Dorsolateral prefrontal cortex (tissue), 120 donors: ENCODE measurements at regions of chr11 and their contacts with region 1.

Region 1: DNA sequence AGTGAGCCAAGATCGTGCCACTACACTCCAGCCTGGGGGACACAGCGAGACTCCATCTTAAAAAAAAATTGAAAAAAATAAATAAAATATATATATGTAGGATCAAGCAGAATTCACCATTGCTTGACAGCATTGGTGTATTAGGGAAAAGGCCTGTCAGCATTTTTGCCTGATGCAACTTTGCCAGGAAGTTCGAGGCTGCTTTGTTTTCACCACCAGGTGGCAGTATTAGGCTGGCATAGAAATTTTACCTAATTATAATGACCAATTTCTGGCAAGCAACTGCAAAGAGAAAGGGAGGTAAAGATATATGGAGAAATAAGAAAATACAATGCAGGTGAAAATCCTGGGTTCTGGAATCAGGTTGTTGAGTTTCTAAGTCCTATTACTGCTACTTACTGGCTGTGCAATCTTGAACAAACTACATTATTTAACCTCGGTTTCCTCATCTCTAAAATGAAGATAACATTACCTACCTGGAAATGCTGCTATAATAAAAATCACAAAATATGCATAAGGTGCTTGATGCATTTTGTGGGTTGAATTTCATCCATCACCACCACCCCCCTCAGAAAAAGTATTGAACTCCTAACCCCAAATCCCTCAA is 24.7 kb downstream of the LAYN start:
- DNase-seq: peak in 8 of 10 donors; percentile 49 to 85 (median 60)
- H3K4me3 ChIP-seq: no peak overlapping the region
- H3K27ac ChIP-seq: peak overlapping the region in 1 of 59 donors; percentile 30
- H3K27me3 ChIP-seq: no peaks in the 10 kb centered on the region
- CTCF ChIP-seq: peak; percentile 87 to 98 (median 95)

Region 2: DNA sequence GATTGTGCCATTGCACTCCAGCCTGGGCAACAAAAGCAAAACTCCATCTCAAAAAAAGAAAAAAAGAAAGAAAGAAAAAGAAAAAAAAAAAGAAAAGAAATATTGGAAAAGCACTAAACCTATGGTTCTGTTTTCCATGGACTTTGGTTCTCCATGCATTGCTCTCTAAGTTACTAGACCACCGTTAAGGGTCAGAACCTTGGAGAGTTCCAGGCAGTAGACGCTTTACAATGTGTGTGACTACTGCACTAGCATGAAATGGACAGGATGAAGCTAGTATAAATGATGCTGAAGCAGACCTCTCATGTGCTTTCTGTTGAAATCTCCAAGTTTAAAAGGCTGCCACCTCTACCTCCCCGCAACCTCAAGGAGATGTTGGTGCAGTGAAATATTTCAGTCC is 100.6 kb after region 1 on chr11:
- intact Hi-C with region 1: no loop called
- DNase-seq: no peak
- H3K4me3 ChIP-seq: no peak overlapping the region
- H3K27ac ChIP-seq: no peak overlapping the region
- H3K27me3 ChIP-seq: no peaks in the 10 kb centered on the region
- CTCF ChIP-seq: no peak

Region 3: GRCh38 chr11:111841370-111842053 is 276.3 kb after region 1 on chr11:
- intact Hi-C with region 1: loop called (anchors 1 to 10 kb)
- DNase-seq: peak; percentile 85 to 98 (median 92)
- H3K4me3 ChIP-seq: peak overlapping the region in 10 of 59 donors; percentile 0 to 25 (median 15)
- H3K27ac ChIP-seq: peak overlapping the region in 48 of 59 donors; percentile 0 to 75 (median 44)
- H3K27me3 ChIP-seq: no peaks in the 10 kb centered on the region
- CTCF ChIP-seq: peak; percentile 86 to 99 (median 96)

Region 4: GRCh38 chr11:111911563-111912401 is 346.6 kb after region 1 on chr11 and contains the start of gene CRYAB:
- intact Hi-C with region 1: no loop called
- DNase-seq: peak; percentile 87 to 97 (median 94)
- H3K4me3 ChIP-seq: peak within 1 kb of the TSS; percentile 44 to 88 (median 68)
- H3K27ac ChIP-seq: peak within 1 kb of the TSS; percentile 92 to 100 (median 99)
- H3K27me3 ChIP-seq: no peaks in the 10 kb centered on the region
- CTCF ChIP-seq: peak in 1 of 56 donors; percentile 7
- total RNA-seq, gene CRYAB: 265 to 3,917 (median 1,020) TPM